ENCODE measurements at regions of chr2 and their contacts with region 1.

Region 1: GRCh38 chr2:189762551-189763298 is at the start of gene OSGEPL1:
- DNase-seq: peak; percentile 80 to 85
- H3K4me3 ChIP-seq: peak within 1 kb of the TSS; percentile 81
- H3K27ac ChIP-seq: peak within 1 kb of the TSS; percentile 70
- H3K4me1 ChIP-seq: peaks cover 6% of the 10 kb centered on the region; the same call in 1 of the 2 replicates
- H3K27me3 ChIP-seq: no peaks in the 10 kb centered on the region
- CTCF ChIP-seq: peak; percentile 61; the same call in 1 of the 2 replicates
- total RNA-seq, gene OSGEPL1: 4.6 and 5.7 TPM in 2 replicates

Region 2: DNA sequence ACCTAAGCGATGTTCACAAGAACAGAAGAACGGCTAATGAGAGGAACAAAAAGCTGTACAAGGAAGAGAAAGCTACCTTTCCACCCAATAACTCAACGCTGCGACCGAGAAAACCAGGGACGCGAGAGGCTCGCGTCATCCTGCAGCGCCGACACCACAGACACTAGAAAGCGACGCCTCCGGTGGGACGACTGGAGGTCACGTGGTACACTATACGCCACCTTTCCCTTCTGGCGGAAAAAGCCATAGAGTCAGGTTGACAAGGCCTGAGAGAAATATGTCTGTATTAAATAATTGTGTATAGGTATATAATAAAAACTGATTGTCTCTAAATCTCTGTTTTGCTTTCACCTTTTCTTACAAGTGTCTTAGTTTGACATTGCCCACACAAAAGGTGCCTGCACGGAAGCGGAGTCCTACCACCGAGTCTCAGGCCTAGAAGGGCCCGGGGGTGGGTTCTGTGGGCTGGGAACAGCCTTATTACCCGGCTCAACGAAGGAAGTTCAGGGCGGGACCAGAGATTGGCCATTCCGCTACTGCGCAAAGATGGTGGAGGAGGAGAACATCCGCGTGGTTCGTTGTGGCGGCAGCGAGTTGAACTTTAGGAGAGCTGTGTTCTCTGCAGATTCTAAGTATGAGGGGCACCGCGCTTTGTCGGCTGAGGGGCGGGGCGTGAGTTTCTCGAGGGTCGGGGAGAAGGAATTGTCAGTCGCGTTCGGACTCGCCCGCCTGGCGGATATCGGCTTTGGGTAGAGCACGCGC is 321.6 kb before region 1 on chr2 and contains the start of gene WDR75:
- CTCF ChIA-PET with region 1: no interaction called
- POLR2A ChIA-PET with region 1: no interaction called
- intact Hi-C with region 1: loop called (anchors 1 kb)
- DNase-seq: peak; percentile 76 to 78
- H3K4me3 ChIP-seq: peak within 1 kb of the TSS; percentile 95
- H3K27ac ChIP-seq: peak within 1 kb of the TSS; percentile 73
- H3K4me1 ChIP-seq: peaks cover 15% of the 10 kb centered on the region
- H3K27me3 ChIP-seq: no peaks in the 10 kb centered on the region
- CTCF ChIP-seq: no peak
- total RNA-seq, gene WDR75: 18.5 and 27.5 TPM in 2 replicates

Region 3: DNA sequence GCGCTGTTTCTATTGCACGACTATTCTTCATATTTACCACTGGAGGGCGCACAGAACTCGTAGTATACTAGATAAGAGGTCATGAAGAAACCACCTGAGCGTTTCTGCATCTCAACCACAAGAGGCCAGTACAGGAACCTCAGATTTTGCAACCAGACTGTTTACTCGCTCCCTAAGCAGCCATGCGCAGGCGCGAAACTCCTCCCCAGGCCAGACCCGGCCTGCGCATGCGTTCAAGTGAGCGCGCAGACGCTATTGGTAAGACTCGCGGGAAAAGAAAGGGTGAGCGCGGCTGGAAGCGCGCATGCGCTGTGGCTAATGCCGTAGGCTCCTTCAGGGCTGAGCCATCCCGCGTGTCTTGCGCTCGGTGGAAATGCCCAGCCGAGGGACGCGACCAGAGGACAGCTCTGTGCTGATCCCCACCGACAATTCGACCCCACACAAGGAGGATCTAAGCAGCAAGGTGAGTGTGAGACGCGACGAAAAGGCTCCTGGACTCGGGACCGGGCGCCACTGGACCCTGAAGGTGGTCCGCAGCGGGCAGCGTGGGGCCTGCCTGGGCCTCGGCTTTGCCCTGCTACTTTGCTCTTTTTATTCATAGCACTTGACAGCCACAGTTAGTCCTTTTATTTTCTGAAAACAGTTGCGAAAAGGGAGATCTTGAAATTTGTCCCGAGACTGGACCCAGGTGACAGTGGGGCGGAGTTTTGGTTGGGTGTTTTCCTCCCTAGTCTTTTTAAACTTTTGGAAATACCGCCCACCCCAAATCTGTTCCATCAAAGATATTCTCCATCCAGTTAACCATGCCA is 101.4 kb before region 1 on chr2 and contains the start of gene ASNSD1:
- CTCF ChIA-PET with region 1: no interaction called
- POLR2A ChIA-PET with region 1: no interaction called
- intact Hi-C with region 1: loop called (anchors 1 kb)
- DNase-seq: peak; percentile 94 to 96
- H3K4me3 ChIP-seq: peak within 1 kb of the TSS; percentile 92
- H3K27ac ChIP-seq: no peak within 1 kb of the TSS
- H3K4me1 ChIP-seq: peaks cover 21% of the 10 kb centered on the region
- H3K27me3 ChIP-seq: no peaks in the 10 kb centered on the region
- CTCF ChIP-seq: peak; percentile 87
- total RNA-seq, gene ASNSD1: 14.8 TPM in 2 replicates

Region 4: GRCh38 chr2:189674374-189675112 is 88.2 kb before region 1 on chr2 and contains the start of gene ANKAR:
- CTCF ChIA-PET with region 1: no interaction called
- POLR2A ChIA-PET with region 1: interaction called, 10 read pairs
- intact Hi-C with region 1: no loop called
- DNase-seq: peak; percentile 50 to 86
- H3K4me3 ChIP-seq: peak within 1 kb of the TSS; percentile 83
- H3K27ac ChIP-seq: peak within 1 kb of the TSS; percentile 43
- H3K4me1 ChIP-seq: no peaks in the 10 kb centered on the region
- H3K27me3 ChIP-seq: no peaks in the 10 kb centered on the region
- CTCF ChIP-seq: peak; percentile 63; the same call in 1 of the 2 replicates
- total RNA-seq, gene ANKAR: 3.6 and 4.4 TPM in 2 replicates

Region 5: DNA sequence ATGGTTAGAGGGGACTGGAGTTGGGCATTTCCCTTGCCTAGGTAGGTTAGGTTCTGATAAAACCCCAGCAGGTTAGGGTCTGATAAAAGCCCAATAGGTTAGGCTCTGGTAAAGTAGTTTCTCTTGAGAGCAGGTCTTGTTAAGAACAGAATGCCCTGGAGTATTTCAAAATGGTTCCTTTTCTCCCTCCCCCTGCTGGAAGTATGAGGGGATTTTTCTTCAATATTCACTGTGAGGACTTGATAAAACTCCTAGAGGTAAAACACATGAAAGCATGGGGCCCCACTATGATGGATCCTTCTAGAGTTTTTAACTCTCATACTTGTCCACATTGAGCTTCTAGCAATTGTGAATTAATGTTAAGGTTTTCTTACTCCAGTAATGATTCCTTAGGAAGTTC is 60.7 kb before region 1 on chr2:
- CTCF ChIA-PET with region 1: no interaction called
- POLR2A ChIA-PET with region 1: no interaction called
- intact Hi-C with region 1: no loop called
- DNase-seq: no peak
- H3K4me3 ChIP-seq: no peak overlapping the region
- H3K27ac ChIP-seq: no peak overlapping the region
- H3K4me1 ChIP-seq: no peaks in the 10 kb centered on the region
- H3K27me3 ChIP-seq: no peaks in the 10 kb centered on the region
- CTCF ChIP-seq: no peak

Region 6: GRCh38 chr2:189783927-189784867 is 21.5 kb after region 1 on chr2 and contains the starts of genes ORMDL1 and PMS1:
- CTCF ChIA-PET with region 1: no interaction called
- POLR2A ChIA-PET with region 1: interaction called, 6 read pairs
- intact Hi-C with region 1: loop called (anchors 1 kb)
- DNase-seq: peak; percentile 82 to 89
- H3K4me3 ChIP-seq: peak within 1 kb of the TSS; percentile 84
- H3K27ac ChIP-seq: peak within 1 kb of the TSS; percentile 53
- H3K4me1 ChIP-seq: peaks cover 11% of the 10 kb centered on the region
- H3K27me3 ChIP-seq: no peaks in the 10 kb centered on the region
- CTCF ChIP-seq: no peak
- total RNA-seq, gene ORMDL1: 21.2 and 32.7 TPM in 2 replicates
- total RNA-seq, gene PMS1: 18.6 and 20.0 TPM in 2 replicates

Region 7: GRCh38 chr2:190271783-190272456 is 509.2 kb after region 1 on chr2:
- CTCF ChIA-PET with region 1: interaction called, 10 read pairs
- POLR2A ChIA-PET with region 1: no interaction called
- intact Hi-C with region 1: no loop called
- DNase-seq: no peak
- H3K4me3 ChIP-seq: no peak overlapping the region
- H3K27ac ChIP-seq: no peak overlapping the region
- H3K4me1 ChIP-seq: no peaks in the 10 kb centered on the region
- H3K27me3 ChIP-seq: no peaks in the 10 kb centered on the region
- CTCF ChIP-seq: no peak